Heart right ventricle (tissue), 16 donors: ENCODE measurements at regions of chr9 and their contacts with region 1.

Region 1: GRCh38 chr9:131197160-131197911 is 72.0 kb downstream of the NUP214 start:
- DNase-seq: no peak
- ATAC-seq: no peak
- H3K4me3 ChIP-seq: no peak overlapping the region
- H3K27ac ChIP-seq: no peak overlapping the region
- H3K4me1 ChIP-seq: no peaks in the 10 kb centered on the region
- H3K27me3 ChIP-seq: no peaks in the 10 kb centered on the region
- CTCF ChIP-seq: no peak

Region 2: GRCh38 chr9:131126059-131126426 is 71.3 kb before region 1 on chr9:
- intact Hi-C with region 1: no loop called
- DNase-seq: no peak
- ATAC-seq: no peak
- H3K4me3 ChIP-seq: peak overlapping the region; percentile 69 to 97 (median 83)
- H3K27ac ChIP-seq: peak overlapping the region in 9 of 10 donors; percentile 66 to 92 (median 84)
- H3K4me1 ChIP-seq: peaks cover 3 to 23% (median 17%) of the 10 kb centered on the region in 9 donors
- H3K27me3 ChIP-seq: no peaks in the 10 kb centered on the region
- CTCF ChIP-seq: no peak

Region 3: DNA sequence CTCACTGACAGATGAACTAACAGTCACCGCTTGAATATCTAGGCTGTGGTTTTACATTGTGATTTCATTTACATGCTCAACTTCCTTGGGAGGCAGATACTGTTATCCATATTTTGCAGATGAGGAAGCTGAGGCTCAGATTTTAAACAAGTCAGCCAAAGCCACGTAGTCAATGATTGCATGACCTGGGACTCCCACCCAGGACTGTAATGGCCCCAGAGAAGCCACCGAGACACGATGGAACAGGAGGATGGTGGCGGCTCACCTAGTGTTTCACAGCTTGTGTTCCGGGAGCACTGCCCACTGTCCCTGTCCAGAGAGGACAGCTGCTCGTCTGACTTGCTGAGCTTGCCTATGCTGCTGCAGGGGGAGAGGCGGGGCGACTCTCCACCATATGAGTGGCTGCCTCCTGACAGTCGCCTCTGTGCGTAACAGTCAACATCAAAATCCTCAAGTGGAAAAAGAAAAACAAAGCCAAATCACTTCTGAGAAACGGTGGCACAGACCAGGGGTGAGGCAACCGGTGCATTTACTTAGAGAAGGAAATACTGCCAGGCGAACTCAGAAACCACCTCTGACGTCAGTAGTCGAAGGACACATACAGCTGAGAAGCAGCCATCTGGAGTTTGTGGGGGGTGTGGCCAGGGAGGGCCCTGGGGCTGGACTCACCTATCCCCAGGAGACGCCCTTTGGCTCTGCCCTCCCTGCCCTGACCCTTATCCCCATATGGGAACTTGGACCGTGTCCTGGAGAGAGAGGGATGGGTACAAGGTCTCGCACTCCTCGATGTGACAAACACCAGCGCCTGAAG is 430.5 kb after region 1 on chr9:
- intact Hi-C with region 1: loop called in 1 of 10 experiments (anchors 10 kb)
- DNase-seq: no peak
- ATAC-seq: peak in 7 of 8 donors; percentile 8 to 80 (median 45)
- H3K4me3 ChIP-seq: peak overlapping the region in 1 of 10 donors; percentile 6
- H3K27ac ChIP-seq: peak overlapping the region in 6 of 10 donors; percentile 5 to 94 (median 40)
- H3K4me1 ChIP-seq: peaks cover 14 to 88% (median 47%) of the 10 kb centered on the region in 9 donors
- H3K27me3 ChIP-seq: no peaks in the 10 kb centered on the region
- CTCF ChIP-seq: no peak